ENCODE measurements at regions of chr5 and their contacts with region 1.

Region 1: DNA sequence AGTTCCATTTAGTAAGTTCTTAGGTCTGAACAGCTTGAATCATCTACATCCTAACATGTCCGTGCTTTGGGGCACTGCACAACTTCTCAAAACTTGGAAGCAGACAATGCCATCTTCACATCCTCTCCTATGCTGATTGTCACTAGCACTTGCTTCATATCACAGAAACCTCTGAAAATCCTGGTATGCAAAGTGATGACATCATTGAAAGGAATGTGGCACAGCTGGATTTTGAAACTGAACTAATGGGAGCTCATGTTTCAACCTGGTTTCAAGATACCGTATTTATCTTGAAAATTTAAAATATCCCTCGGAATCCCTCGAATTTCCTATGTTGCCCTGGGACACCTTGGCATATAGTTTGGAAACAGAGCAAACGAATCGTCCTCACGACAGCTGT is 490.2 kb upstream of the DAP start:
- DNase-seq: no peak
- ATAC-seq: no peak
- H3K4me3 ChIP-seq: no peak overlapping the region
- H3K27ac ChIP-seq: no peak overlapping the region
- H3K4me1 ChIP-seq: no peaks in the 10 kb centered on the region
- H3K27me3 ChIP-seq: no peaks in the 10 kb centered on the region
- CTCF ChIP-seq: no peak
- EP300 ChIP-seq: no peak
- POLR2A ChIP-seq: no peak
- RAD21 ChIP-seq: no peak

Region 2: GRCh38 chr5:12023614-12024241 is 772.5 kb after region 1 on chr5:
- CTCF ChIA-PET with region 1: no interaction called
- POLR2A ChIA-PET with region 1: no interaction called
- RAD21 ChIA-PET with region 1: no interaction called
- SMC1A ChIA-PET with region 1: no interaction called
- in situ Hi-C with region 1: loop called (anchors 25 kb)
- intact Hi-C with region 1: no loop called
- DNase-seq: peak; percentile 1
- ATAC-seq: peak; percentile 54; the same call in 2 of the 3 replicates
- H3K4me3 ChIP-seq: no peak overlapping the region
- H3K27ac ChIP-seq: no peak overlapping the region
- H3K4me1 ChIP-seq: no peaks in the 10 kb centered on the region
- H3K27me3 ChIP-seq: no peaks in the 10 kb centered on the region
- CTCF ChIP-seq: peak; percentile 45 to 48 (median 47); a peak in 5 of 6 replicates
- EP300 ChIP-seq: no peak
- POLR2A ChIP-seq: no peak
- RAD21 ChIP-seq: peak; percentile 61

Measured in GM12878 (cell line).